Calu3 (cell line): ENCODE measurements at regions of chr16 and their contacts with region 1.

Region 1: DNA sequence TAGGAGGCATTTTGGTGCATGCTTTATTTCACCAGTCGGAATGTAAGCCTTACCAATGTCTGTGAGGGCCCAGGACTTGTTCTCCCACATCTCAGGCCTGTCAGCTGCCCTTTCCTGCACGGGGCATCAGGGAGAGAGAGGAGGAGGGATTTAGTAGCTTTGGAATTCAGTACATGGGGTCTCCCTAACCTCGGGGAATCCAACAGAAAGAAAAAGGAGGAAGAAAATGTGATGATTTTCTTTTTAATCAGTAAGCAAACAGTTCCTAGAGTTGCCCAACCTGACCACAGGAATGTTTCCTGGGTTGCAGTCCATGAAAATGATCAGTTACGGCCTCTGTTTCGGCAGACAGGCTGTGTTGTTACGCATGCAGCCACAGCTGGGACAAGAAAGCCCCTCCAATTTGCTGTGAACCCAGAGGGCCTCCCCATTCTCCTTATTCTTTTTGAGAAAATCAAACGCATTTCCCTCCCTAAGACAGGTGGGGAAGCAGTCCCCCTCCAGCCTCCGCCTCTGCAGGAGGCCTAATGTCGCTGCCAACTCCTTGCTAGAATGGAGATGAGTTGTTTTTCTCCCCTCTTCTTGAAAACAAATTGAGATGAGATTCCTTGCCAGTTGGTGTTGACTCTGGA is 53.1 kb upstream of the TANGO6 start:
- DNase-seq: peak; percentile 74
- H3K4me3 Mint-ChIP-seq: peak overlapping the region; percentile 29
- H3K27ac Mint-ChIP-seq: peak overlapping the region; percentile 45
- H3K4me1 Mint-ChIP-seq: peaks cover 54% of the 10 kb centered on the region
- H3K27me3 Mint-ChIP-seq: no peaks in the 10 kb centered on the region
- CTCF ChIP-seq: no peak

Region 2: DNA sequence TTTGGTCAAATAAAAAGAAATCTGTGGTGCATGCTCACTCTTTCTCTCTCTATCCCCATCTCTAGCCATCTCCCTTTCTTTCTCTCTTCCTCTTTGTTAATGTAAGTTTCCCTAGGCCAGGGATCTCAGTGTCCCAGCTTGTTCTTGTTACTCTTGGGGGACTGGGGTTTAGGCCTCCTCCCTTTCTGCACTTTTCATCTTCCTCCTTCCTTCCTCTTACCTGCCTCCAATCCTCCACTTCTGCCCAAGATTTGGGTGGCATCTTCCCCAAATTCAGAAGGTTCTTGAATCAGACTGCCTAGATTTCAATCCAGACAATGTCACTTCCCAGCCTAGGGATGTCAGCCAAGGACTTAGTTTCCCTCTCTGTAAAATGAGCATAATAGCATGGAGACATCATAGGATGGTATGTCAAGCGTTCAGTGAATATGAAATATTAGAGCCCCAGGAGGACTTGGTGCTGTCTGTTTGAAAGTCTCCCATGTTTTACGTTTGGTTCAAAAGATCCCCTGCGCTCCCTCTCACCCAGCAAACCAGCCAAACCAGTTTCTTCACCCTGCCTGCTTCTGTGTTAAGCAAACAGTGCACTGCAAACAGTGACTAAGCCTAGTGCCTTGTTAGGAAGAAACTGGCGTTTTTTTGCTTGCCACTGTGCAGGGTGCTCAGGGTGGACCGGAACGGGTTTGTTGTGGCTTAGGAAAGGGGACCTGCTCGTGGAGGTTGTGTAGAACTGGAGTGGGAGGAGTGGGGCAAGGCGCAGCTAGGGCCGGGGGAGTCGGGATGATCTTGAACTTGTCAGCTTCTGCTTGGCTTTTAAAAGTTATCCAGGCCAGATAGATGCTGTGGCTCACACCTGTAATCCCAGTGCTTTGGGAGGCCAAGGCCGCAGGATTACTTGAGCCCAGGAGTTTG is 45.6 kb before region 1 on chr16:
- CTCF ChIA-PET with region 1: interaction called, 5 read pairs
- intact Hi-C with region 1: loop called (anchors 2 kb)
- DNase-seq: peak; percentile 93
- H3K4me3 Mint-ChIP-seq: peak overlapping the region; percentile 62
- H3K27ac Mint-ChIP-seq: peak overlapping the region; percentile 91
- H3K4me1 Mint-ChIP-seq: peaks cover 86% of the 10 kb centered on the region
- H3K27me3 Mint-ChIP-seq: no peaks in the 10 kb centered on the region
- CTCF ChIP-seq: no peak

Region 3: GRCh38 chr16:68756250-68756915 is 33.9 kb before region 1 on chr16:
- CTCF ChIA-PET with region 1: interaction called, 8 read pairs
- intact Hi-C with region 1: loop called (anchors 1 kb)
- DNase-seq: peak; percentile 95
- H3K4me3 Mint-ChIP-seq: peak overlapping the region; percentile 54
- H3K27ac Mint-ChIP-seq: peak overlapping the region; percentile 94
- H3K4me1 Mint-ChIP-seq: peaks cover 81% of the 10 kb centered on the region
- H3K27me3 Mint-ChIP-seq: no peaks in the 10 kb centered on the region
- CTCF ChIP-seq: no peak

Region 4: GRCh38 chr16:68778551-68779231 is 11.6 kb before region 1 on chr16:
- CTCF ChIA-PET with region 1: interaction called, 6 read pairs
- intact Hi-C with region 1: loop called (anchors 2 kb)
- DNase-seq: peak; percentile 67
- H3K4me3 Mint-ChIP-seq: peak overlapping the region; percentile 36
- H3K27ac Mint-ChIP-seq: peak overlapping the region; percentile 83
- H3K4me1 Mint-ChIP-seq: peaks cover 35% of the 10 kb centered on the region
- H3K27me3 Mint-ChIP-seq: no peaks in the 10 kb centered on the region
- CTCF ChIP-seq: no peak

Region 5: DNA sequence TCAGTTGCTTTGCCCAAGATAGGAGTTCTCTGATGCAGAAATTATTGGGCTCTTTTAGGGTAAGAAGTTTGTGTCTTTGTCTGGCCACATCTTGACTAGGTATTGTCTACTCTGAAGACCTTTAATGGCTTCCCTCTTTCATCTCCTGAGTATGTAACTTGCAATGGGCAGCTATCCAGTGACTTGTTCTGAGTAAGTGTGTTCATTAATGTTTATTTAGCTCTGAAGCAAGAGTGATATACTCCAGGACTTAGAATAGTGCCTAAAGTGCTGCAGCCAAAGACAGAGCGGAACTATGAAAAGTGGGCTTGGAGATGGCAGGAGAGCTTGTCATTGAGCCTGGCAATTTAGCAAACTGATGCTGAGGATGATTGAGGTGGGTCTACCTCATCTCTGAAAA is 44.3 kb after region 1 on chr16:
- CTCF ChIA-PET with region 1: no interaction called
- intact Hi-C with region 1: no loop called
- DNase-seq: no peak
- H3K4me3 Mint-ChIP-seq: no peak overlapping the region
- H3K27ac Mint-ChIP-seq: no peak overlapping the region
- H3K4me1 Mint-ChIP-seq: no peaks in the 10 kb centered on the region
- H3K27me3 Mint-ChIP-seq: no peaks in the 10 kb centered on the region
- CTCF ChIP-seq: no peak